HCT116 (cell line): ENCODE measurements at regions of chr12 and their contacts with region 1.

Region 1: DNA sequence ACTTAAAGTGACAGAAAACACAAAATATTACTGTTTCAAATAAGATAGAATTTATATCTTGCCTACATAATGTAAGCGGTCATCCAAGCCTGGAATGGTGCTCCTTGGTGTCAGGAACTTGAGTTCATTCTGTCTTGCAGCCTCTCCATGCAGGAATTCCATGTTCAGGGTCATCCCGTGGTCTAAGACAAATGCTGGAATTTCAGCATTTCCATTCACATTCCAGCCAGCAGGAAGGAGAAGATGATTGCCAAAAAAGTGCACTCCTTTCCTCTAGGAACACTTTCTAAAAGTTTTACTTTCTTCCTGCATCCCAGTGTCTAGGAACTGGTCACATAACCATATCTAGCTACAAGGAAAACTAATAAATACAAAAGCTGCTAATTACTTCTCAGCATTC is 106.3 kb downstream of the PTPRO start:
- DNase-seq: no peak
- ATAC-seq: no peak
- H3K4me3 ChIP-seq: no peak overlapping the region
- H3K27ac ChIP-seq: no peak overlapping the region
- H3K4me1 ChIP-seq: no peaks in the 10 kb centered on the region
- H3K27me3 ChIP-seq: peaks cover 38% of the 10 kb centered on the region
- CTCF ChIP-seq: 0 out of 6 replicates have a peak, but pooled peaks of 2 of the 3 experiments have one; percentile 5 to 6
- POLR2A ChIP-seq: no peak
- RAD21 ChIP-seq: no peak

Region 2: DNA sequence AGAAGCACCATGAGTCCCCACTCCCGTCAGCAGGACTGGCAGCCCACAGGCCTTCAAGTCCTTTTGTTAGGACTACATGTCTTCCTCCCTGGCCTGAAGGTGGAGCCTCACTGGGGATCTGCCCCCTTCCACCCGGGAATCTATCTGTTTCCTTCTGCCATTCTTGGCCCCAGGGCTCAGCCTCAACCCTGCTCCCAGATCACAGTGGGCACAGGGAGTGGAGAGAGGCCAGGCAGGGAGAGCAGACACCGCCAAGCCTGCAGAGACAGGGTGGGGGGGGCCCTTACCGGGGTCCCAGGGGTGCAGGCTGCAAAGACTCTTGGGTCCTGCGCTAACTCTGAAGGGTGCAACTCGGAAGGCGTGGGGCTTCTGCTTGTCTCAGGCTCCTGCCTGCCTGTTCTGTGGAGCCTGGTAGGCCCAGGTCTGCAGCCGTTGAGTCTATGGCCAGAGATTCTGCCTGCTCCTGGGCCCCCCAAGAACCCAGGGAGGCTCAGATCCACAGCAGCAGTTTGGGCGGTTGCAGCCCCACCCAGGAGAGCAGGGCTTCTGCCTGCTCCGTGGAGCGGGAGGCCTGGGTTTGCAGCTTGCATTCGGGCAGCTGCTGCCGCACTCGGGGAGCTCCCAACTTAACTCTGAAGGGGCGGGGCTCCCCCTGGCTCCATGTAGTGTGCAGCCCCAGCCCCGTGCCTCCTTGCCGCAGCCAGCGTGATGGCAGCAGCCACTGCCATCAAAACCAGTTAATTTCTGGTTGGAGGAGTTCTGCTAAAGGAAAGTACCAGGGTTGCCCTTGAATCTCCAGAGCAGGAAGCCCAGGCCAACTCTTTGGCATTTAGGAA is 839.2 kb before region 1 on chr12:
- CTCF ChIA-PET with region 1: no interaction called
- POLR2A ChIA-PET with region 1: no interaction called
- RAD21 ChIA-PET with region 1: no interaction called
- intact Hi-C with region 1: no loop called
- DNase-seq: no peak
- ATAC-seq: no peak
- H3K4me3 ChIP-seq: no peak overlapping the region
- H3K27ac ChIP-seq: no peak overlapping the region
- H3K4me1 ChIP-seq: no peaks in the 10 kb centered on the region
- H3K27me3 ChIP-seq: no peaks in the 10 kb centered on the region
- CTCF ChIP-seq: no peak
- POLR2A ChIP-seq: no peak
- RAD21 ChIP-seq: no peak

Region 3: DNA sequence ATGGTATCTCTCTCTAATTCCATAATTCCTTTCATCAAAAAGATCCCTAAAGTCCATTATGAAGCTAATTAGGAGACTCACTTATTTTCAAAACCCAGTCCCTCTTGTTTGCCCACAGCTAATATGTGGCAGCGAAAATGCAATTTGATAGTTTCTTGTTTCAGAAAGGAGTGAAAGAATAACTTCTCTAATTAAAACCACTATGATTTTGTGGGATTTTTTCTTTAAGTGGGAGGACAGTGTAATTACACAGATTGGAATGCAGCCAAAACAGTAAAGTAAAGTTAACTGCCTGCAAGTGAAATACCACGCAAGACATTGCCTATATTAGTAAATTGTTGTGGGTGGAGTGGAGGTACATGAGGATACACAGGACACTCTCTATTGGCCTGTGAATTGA is 56.3 kb before region 1 on chr12:
- CTCF ChIA-PET with region 1: no interaction called
- POLR2A ChIA-PET with region 1: no interaction called
- RAD21 ChIA-PET with region 1: no interaction called
- intact Hi-C with region 1: loop called (anchors 5 kb)
- DNase-seq: no peak
- ATAC-seq: no peak
- H3K4me3 ChIP-seq: no peak overlapping the region
- H3K27ac ChIP-seq: no peak overlapping the region
- H3K4me1 ChIP-seq: no peaks in the 10 kb centered on the region
- H3K27me3 ChIP-seq: peaks cover 50% of the 10 kb centered on the region
- CTCF ChIP-seq: no peak
- POLR2A ChIP-seq: no peak
- RAD21 ChIP-seq: no peak

Region 4: GRCh38 chr12:15719230-15719629 is 290.6 kb after region 1 on chr12:
- CTCF ChIA-PET with region 1: no interaction called
- POLR2A ChIA-PET with region 1: no interaction called
- RAD21 ChIA-PET with region 1: no interaction called
- intact Hi-C with region 1: no loop called
- DNase-seq: no peak
- ATAC-seq: no peak
- H3K4me3 ChIP-seq: no peak overlapping the region
- H3K27ac ChIP-seq: no peak overlapping the region
- H3K4me1 ChIP-seq: peaks cover 28 to 71% of the 10 kb centered on the region in 2 experiments
- H3K27me3 ChIP-seq: no peaks in the 10 kb centered on the region
- CTCF ChIP-seq: no peak
- POLR2A ChIP-seq: no peak
- RAD21 ChIP-seq: no peak